Mammary epithelial cell (primary cell): ENCODE measurements at regions of chr13 and their contacts with region 1.

Region 1: GRCh38 chr13:45206340-45206739 is 5.5 kb upstream of the KCTD4 start:
- DNase-seq: peak; percentile 96
- H3K4me3 ChIP-seq: peak overlapping the region in 1 of 3 experiments; percentile 41
- H3K27ac ChIP-seq: peak overlapping the region; percentile 94
- H3K4me1 ChIP-seq: peaks cover 51% of the 10 kb centered on the region
- H3K27me3 ChIP-seq: no peaks in the 10 kb centered on the region
- CTCF ChIP-seq: no peak

Region 2: DNA sequence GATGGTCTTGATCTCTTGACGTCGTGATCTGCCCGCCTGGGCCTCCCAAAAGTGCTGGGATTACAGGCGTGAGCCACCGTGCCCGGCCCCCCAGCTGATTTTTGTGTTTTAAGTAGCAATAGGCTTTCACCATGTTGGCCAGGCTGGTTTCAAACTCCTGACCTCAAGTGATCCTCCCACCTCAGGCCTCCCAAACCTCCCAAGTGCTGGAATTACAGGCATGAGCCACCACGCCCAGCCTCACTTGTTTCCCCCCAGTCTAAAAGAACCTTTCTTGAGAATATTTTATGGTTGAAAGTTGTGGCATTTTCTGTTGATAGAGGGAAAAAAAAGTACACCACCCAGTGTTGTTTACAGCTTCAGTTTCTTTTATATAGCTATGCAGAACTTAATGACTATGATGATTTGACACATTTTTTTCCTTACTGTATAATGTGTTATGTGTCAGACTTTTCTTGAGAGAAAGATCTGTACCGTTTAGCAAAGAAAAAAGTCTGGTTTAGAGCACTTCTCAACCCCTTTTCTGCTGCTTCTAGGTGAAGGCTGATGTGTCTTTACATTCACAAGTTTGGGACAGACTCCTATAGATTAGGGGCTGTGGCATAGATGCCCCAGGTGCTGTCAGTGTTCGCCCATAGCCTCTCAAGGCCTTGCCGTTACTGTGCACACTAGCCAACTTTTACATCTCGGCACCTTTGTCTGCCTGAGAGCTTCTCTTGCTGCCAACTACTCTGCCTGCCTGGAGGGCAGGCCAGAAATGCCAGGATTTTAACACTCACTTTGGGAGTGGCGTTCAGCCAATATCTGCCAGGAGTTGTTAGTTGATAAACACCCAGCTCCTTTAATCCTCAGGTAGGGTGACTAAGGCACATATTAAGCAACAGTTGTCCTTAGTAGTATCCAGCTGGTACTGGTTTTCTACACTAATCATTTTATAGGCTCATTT is 38.5 kb before region 1 on chr13:
- CTCF ChIA-PET with region 1: no interaction called
- dilution Hi-C with region 1: no loop called
- in situ Hi-C with region 1: no loop called
- intact Hi-C with region 1: loop called (anchors 1 kb)
- DNase-seq: peak; percentile 98
- H3K4me3 ChIP-seq: no peak overlapping the region
- H3K27ac ChIP-seq: peak overlapping the region; percentile 81
- H3K4me1 ChIP-seq: peaks cover 17% of the 10 kb centered on the region
- H3K27me3 ChIP-seq: no peaks in the 10 kb centered on the region
- CTCF ChIP-seq: no peak

Region 3: DNA sequence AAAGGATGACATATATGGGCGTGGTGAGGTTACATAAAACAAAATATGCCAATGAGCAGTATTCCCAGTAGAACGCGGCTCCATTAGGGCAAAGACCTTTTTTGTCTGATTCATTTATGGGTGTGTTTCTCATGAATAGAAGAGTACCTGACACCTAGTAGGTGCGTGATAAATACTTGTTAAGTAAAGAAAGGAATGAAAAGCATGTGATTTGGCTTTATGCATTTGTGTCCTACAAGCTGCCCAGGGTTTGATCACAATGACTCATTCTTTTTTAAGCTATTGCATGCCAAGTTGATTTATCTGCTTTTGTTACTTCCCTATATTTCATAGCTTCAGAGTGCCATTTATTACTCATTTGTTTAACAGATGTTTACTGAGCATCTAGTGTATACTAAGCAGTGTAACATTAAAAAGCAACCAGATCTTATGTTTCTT is 13.6 kb after region 1 on chr13:
- CTCF ChIA-PET with region 1: no interaction called
- dilution Hi-C with region 1: no loop called
- in situ Hi-C with region 1: no loop called
- intact Hi-C with region 1: loop called (anchors 1 kb)
- DNase-seq: peak; percentile 98
- H3K4me3 ChIP-seq: peak overlapping the region in 1 of 3 experiments; percentile 17
- H3K27ac ChIP-seq: peak overlapping the region; percentile 91
- H3K4me1 ChIP-seq: peaks cover 44% of the 10 kb centered on the region
- H3K27me3 ChIP-seq: no peaks in the 10 kb centered on the region
- CTCF ChIP-seq: no peak

Region 4: GRCh38 chr13:45385907-45386553 is 179.7 kb after region 1 on chr13:
- CTCF ChIA-PET with region 1: no interaction called
- dilution Hi-C with region 1: no loop called
- in situ Hi-C with region 1: no loop called
- intact Hi-C with region 1: no loop called
- DNase-seq: no peak
- H3K4me3 ChIP-seq: no peak overlapping the region
- H3K27ac ChIP-seq: no peak overlapping the region
- H3K4me1 ChIP-seq: no peaks in the 10 kb centered on the region
- H3K27me3 ChIP-seq: no peaks in the 10 kb centered on the region
- CTCF ChIP-seq: no peak